ENCODE measurements at regions of chr1 and their contacts with region 1.

Region 1: DNA sequence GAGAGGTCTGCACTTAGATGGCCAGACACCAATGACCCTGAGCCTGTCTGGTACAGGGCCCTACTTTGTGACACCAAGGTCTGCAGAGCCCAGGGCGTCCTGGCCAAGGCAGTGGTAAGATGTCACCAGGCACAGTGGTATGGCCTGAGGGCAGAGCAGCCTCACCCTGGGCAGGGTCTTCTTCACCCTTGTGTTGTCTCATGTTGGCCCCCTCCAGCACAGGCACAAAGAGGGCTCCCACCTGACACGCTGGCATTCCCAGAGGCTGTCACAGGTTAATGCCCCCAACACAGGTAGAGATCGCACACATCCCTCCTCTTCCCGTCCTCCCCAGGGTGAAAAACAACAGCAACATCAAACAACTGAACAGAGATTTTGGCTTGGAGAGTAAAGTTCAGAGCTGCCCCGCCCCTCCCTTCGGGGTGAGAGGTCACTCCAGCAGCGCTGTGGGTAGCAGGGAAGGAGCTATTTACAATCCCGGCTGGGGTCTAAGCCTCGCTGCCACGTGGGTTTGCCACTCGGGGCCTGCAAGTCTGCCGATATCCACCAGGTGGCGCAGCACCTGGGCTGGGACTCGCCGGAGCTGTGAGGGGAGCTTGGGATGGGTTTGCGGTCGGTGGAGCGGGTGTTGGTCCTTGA is 12.6 kb downstream of the EFNA3 start:
- DNase-seq: peak; percentile 84
- ATAC-seq: peak; percentile 62

Region 2: DNA sequence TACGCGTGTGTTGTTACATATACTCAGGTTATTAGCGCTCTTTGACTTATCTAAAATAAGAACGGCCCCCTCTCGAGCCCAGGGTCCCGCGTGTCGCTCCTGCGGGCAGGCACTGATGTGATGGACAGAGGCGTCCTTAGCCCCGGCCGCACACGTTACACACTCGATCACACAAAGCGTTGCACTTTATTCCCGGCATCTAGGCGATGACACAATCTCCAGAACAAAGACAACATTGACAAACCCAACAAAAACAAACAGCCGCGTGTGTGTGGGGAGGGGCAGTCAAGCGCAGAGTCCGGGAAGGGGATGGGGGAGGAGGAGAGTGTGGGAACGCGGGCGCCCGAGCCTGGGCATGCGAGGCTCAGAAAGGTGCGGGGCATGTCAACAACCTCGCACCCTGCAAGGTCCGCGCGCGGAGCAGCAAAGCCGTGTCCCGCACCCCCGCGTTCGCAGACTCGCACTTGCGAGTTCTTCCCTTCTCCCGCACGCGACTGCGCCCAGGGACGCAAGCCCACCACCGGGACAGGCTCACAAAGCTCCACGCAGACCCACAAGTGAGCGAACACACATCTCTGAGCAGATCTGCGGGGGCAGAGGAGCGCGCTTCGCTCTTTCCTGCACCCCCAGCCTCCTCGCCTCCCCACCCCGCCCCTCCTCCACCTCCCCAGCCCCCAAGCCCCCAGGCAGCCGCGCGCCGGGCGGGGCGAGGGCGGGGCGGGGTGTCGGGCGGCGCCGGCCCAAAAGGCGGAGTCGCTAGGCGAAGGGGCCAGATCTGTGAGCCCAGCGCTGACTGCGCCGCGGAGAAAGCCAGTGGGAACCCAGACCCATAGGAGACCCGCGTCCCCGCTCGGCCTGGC is 36.1 kb after region 1 on chr1 and contains the start of gene EFNA1:
- intact Hi-C with region 1: loop called in 1 of 2 experiments (anchors 5 kb)
- DNase-seq: peak; percentile 82
- ATAC-seq: peak; percentile 74 to 75
- total RNA-seq, gene EFNA1: 33.3 to 39.1 TPM

Region 3: DNA sequence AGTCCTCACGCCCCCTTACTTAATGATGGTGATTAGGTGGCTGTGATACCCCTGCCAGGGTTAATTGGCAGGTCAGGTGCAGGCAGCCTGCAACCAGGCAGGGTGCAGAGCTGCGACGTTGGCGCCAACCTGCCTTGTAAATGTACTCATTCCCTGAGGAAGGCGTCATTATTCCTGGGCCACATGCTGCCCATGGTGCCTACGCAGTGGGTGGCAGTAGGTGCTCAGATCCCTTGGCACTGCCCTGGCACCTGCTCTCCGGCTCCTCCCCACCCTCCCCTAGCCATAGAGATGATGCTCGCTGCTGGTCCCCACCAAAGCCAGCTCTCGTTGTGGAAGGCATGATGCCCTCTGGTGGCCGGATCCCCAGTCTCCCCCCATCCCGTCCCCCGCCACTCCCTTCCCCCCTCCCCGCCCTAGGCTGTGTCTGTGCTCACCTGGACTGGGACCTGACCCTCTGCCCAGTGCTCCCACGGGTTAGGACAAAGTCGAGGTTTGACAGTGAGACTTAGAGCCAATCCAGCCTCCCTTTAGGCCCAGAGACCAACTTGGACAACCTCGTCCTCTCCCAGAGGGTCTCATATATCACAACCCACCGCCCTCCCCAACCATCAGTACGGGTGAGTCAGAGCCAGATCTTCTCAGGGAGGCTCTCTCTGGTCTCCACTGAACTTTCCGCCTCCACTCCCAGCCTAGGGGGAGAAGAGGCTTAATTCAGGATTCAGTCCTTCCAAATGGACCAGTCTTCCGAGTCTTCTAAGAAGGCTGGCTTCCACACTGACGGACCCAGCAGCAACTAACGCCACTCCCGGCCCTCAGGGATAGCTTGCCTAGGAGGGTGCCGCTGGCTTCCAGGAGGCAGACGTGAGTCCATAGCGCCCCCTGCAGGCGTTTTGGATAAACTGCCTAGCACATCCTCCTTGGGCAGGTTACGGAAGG is 76.2 kb after region 1 on chr1:
- intact Hi-C with region 1: loop called (anchors 1 to 2 kb)
- DNase-seq: peak; percentile 93
- ATAC-seq: peak; percentile 75 to 83